IMR-90 (cell line): ENCODE measurements at regions of chr4 and their contacts with region 1.

Region 1: DNA sequence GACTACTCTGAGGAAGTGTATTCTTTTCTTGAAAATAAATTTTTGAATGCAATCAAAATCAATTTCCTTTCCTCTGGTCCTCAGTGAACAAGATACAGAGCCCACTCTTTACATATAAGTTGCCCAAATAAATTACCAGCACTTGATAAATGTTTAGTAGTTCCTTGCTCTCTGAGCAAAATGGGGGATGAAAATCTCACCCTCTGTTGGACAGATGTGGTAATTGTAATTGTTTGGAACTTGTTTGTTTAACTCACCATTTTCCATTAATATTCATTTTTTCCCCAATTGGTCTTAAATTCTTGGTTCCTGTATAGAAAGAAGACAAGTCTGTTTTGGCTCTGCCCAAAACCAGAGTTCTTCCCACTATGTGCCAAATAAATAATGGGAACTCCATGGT is 146.3 kb downstream of the LDB2 start:
- DNase-seq: peak; percentile 25
- ATAC-seq: no peak
- H3K4me3 ChIP-seq: no peak overlapping the region
- H3K27ac ChIP-seq: no peak overlapping the region
- H3K4me1 ChIP-seq: no peaks in the 10 kb centered on the region
- H3K27me3 ChIP-seq: no peaks in the 10 kb centered on the region
- CTCF ChIP-seq: peak; percentile 39
- POLR2A ChIP-seq: no peak
- RAD21 ChIP-seq: peak; percentile 55

Region 2: DNA sequence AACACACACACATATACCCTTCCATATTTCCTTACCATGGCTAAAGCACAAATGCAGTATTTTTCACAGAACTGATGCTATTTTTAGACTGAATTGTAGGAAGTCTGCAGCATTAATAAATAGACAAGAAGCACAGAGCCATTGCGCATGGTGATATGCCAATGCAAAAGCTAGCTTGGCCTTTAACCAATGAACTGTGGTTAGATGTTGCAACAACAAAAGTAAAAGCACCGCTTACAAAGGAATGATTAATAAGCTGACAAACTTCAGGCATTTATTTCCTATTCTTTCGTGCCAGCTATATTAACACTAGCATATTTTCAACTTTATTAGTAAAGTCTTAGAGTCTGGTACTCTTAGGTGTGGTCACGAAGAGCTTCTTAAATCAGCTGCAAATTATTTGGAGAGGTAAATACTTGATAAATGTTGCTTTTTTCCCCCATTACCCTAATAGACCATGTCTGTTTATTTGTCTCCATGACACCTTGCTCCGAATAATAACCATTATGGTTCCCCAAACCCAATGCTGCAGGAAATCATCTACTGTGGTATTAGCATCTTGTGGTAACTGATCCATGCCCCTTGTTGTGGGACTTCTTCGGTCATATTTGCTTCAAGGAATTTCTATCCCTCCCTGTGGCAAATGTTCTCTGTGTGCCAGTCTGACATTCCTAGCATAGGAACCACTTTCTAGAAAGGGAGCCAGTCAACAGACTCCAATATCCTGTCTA is 219.7 kb before region 1 on chr4:
- CTCF ChIA-PET with region 1: interaction called, 11 read pairs
- POLR2A ChIA-PET with region 1: no interaction called
- dilution Hi-C with region 1: no loop called
- in situ Hi-C with region 1: no loop called
- intact Hi-C with region 1: no loop called
- DNase-seq: peak; percentile 91
- ATAC-seq: peak; percentile 79
- H3K4me3 ChIP-seq: no peak overlapping the region
- H3K27ac ChIP-seq: 0 out of 2 replicates have a peak overlapping the region, but pooled peaks have one; percentile 9
- H3K4me1 ChIP-seq: peaks cover 12% of the 10 kb centered on the region
- H3K27me3 ChIP-seq: no peaks in the 10 kb centered on the region
- CTCF ChIP-seq: no peak
- POLR2A ChIP-seq: no peak
- RAD21 ChIP-seq: no peak